ENCODE measurements at regions of chr3 and their contacts with region 1.

Region 1: DNA sequence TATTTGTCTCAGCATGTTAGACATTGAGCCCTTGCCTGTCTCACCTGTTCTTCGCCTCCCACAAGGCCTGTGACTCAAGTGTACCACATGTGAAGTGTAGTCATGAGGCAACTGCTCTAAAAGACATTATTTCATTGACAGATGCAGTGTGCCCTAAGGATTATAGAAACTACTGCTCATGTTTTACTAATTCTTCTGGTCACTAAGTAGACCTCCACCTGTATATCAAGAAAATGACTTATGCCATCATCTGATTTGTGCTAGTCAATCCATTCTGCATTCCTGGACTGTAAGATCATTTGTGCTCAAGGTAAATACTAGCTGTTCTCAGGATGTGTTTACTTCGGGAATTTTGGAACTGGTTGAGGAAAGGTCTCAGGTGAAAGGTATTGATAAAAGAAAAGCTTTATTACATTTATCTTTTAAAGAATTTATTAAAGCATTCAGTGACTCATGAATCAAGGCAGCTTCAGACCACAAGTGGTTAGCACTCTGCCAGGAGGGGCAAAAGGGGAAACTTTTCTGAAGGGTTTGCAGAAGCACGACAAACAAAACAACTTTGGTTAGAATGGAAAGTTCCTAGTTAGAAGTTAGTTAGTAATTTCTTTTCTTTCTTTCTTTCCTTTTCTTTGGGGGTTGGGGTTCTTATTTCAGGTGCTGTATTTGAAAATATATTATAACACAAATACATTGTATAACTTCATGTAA is 465.3 kb upstream of the CBLB start:
- DNase-seq: peak; percentile 31
- H3K4me3 Mint-ChIP-seq: peak overlapping the region; percentile 63
- H3K27ac Mint-ChIP-seq: peak overlapping the region; percentile 92
- H3K4me1 Mint-ChIP-seq: peaks cover 89% of the 10 kb centered on the region
- H3K27me3 Mint-ChIP-seq: no peaks in the 10 kb centered on the region

Region 2: GRCh38 chr3:105827959-105828358 is 506.1 kb before region 1 on chr3:
- intact Hi-C with region 1: loop called (anchors 1 kb)
- DNase-seq: no peak
- H3K4me3 Mint-ChIP-seq: peak overlapping the region; percentile 57
- H3K27ac Mint-ChIP-seq: peak overlapping the region; percentile 96
- H3K4me1 Mint-ChIP-seq: peaks cover 88% of the 10 kb centered on the region
- H3K27me3 Mint-ChIP-seq: no peaks in the 10 kb centered on the region

Region 3: DNA sequence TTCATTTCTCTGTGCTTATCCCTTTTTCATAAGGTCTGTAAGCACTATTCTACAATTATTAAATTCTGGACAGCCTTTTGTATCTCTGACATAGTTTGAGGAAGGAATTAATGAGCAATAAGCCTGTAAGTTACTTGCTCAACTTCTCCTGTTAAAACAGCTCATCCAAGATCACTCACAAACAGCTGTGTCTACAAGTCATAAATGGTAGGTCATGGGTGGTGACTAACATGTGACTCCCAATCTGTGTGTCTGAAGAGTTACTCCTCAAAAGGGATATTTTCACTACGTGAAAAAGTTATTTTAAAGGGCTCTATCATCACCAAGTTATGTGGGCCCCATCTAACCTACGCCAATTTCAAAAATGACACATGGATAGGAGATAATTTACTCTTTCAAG is 320.1 kb before region 1 on chr3:
- intact Hi-C with region 1: loop called (anchors 1 kb)
- DNase-seq: no peak
- H3K4me3 Mint-ChIP-seq: no peak overlapping the region
- H3K27ac Mint-ChIP-seq: peak overlapping the region; percentile 5
- H3K4me1 Mint-ChIP-seq: peaks cover 65% of the 10 kb centered on the region
- H3K27me3 Mint-ChIP-seq: no peaks in the 10 kb centered on the region

Region 4: DNA sequence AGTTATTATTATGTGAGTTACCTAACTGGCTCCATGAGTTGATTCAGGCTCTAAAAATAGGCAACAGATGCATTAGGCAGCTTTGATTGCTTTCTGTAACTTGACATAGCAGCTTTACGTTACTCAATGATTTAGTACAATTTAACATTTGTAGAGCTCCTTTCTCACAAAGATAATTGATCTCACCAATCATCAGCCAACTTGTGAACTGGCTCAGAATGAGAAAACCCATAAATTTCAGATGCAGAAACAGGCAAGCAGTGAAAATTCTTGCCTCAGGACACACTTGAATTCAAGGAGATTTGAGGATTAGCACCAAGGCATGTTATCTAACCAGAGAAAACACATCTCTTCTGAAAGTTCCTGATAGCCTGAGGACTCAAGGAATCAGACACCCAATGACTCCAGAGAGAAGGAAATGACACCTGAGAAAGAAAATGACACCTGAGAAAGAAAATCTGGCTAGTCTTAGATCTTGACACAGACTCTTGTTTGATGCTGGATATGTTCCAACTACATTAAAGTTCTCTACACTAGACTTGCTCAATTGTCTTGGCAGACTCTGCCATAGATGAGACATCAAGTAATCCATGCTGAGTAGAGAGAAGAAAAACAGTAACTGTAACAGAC is 150.2 kb before region 1 on chr3:
- intact Hi-C with region 1: loop called (anchors 2 kb)
- DNase-seq: no peak
- H3K4me3 Mint-ChIP-seq: peak overlapping the region; percentile 10
- H3K27ac Mint-ChIP-seq: peak overlapping the region; percentile 31
- H3K4me1 Mint-ChIP-seq: peaks cover 56% of the 10 kb centered on the region
- H3K27me3 Mint-ChIP-seq: no peaks in the 10 kb centered on the region

Region 5: DNA sequence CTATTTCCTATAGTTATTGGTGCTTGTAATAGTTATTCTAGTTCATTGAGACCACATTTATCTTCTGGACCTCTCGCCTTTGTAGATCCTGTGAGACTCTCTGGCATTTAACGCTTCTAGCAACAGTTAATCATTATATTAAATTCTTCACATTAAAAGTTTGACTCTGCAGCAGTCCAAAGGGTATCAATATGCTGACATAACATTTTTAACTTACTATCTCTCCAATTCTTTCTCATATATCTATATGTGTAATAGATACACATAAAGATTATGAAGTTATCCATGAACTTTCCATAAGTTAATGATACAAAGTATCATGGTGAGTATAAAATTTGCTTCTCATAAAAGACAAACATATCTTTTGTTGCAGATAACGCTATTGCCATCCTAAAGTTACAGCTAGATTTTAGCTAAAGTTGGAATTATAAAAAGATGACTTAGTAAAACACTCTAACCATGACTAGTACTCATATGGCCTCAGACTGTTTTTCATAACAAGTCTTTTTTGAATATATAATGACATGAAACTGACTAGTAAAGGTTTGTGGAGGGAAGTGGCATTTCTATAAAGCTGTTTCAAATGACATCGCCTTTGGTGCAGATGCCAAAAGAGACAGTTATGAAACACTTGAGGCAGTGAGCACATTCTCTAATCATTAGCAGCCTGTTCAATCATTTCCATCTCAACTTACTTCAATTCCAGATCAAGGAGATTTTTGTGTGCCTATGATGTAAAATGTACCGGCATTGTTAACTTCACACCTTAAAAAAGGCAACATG is 86.0 kb before region 1 on chr3:
- intact Hi-C with region 1: loop called (anchors 1 kb)
- DNase-seq: no peak
- H3K4me3 Mint-ChIP-seq: peak overlapping the region; percentile 16
- H3K27ac Mint-ChIP-seq: peak overlapping the region; percentile 67
- H3K4me1 Mint-ChIP-seq: peaks cover 32% of the 10 kb centered on the region
- H3K27me3 Mint-ChIP-seq: no peaks in the 10 kb centered on the region

Region 6: GRCh38 chr3:106473576-106474475 is 139.8 kb after region 1 on chr3:
- intact Hi-C with region 1: loop called (anchors 1 kb)
- DNase-seq: no peak
- H3K4me3 Mint-ChIP-seq: no peak overlapping the region
- H3K27ac Mint-ChIP-seq: peak overlapping the region; percentile 94
- H3K4me1 Mint-ChIP-seq: peaks cover 18% of the 10 kb centered on the region
- H3K27me3 Mint-ChIP-seq: no peaks in the 10 kb centered on the region

Measured in activated T-helper 1 cell treated with anti-CD3 and anti-CD28 coated beads, Interleukin-12 subunit alpha, Interleukin-12 subunit beta, Interleukin-2, Interleukin-4 antibody, amounts not matched to agents 30 ng/mL and 10 ng/mL and 1 ng/mL, durations not matched to agents 14 hours and 24 hours and 36 hours (primary cell).